Endothelial cell of umbilical vein (primary cell): ENCODE measurements at regions of chr13 and their contacts with region 1.

Region 1: GRCh38 chr13:106493533-106494220 is 41.8 kb downstream of the EFNB2 start:
- DNase-seq: no peak
- H3K4me3 ChIP-seq: no peak overlapping the region
- H3K27ac ChIP-seq: no peak overlapping the region
- H3K4me1 ChIP-seq: peaks cover 35% of the 10 kb centered on the region
- H3K27me3 ChIP-seq: no peaks in the 10 kb centered on the region
- CTCF ChIP-seq: no peak
- POLR2A ChIP-seq: no peak

Region 2: GRCh38 chr13:106357198-106357597 is 136.5 kb before region 1 on chr13:
- CTCF ChIA-PET with region 1: no interaction called
- POLR2A ChIA-PET with region 1: no interaction called
- dilution Hi-C with region 1: no loop called
- intact Hi-C with region 1: no loop called
- DNase-seq: peak; percentile 66
- H3K4me3 ChIP-seq: no peak overlapping the region
- H3K27ac ChIP-seq: no peak overlapping the region
- H3K4me1 ChIP-seq: peaks cover 6% of the 10 kb centered on the region
- H3K27me3 ChIP-seq: no peaks in the 10 kb centered on the region
- CTCF ChIP-seq: no peak
- POLR2A ChIP-seq: no peak

Region 3: GRCh38 chr13:106382534-106382933 is 111.1 kb before region 1 on chr13:
- CTCF ChIA-PET with region 1: no interaction called
- POLR2A ChIA-PET with region 1: no interaction called
- dilution Hi-C with region 1: no loop called
- intact Hi-C with region 1: no loop called
- DNase-seq: no peak
- H3K4me3 ChIP-seq: no peak overlapping the region
- H3K27ac ChIP-seq: no peak overlapping the region
- H3K4me1 ChIP-seq: no peaks in the 10 kb centered on the region
- H3K27me3 ChIP-seq: no peaks in the 10 kb centered on the region
- CTCF ChIP-seq: no peak
- POLR2A ChIP-seq: no peak

Region 4: GRCh38 chr13:106401081-106401480 is 92.6 kb before region 1 on chr13:
- CTCF ChIA-PET with region 1: no interaction called
- POLR2A ChIA-PET with region 1: no interaction called
- dilution Hi-C with region 1: no loop called
- intact Hi-C with region 1: loop called (anchors 1 kb)
- DNase-seq: peak; percentile 77
- H3K4me3 ChIP-seq: no peak overlapping the region
- H3K27ac ChIP-seq: no peak overlapping the region
- H3K4me1 ChIP-seq: peaks cover 14% of the 10 kb centered on the region
- H3K27me3 ChIP-seq: no peaks in the 10 kb centered on the region
- CTCF ChIP-seq: no peak
- POLR2A ChIP-seq: no peak

Region 5: GRCh38 chr13:106738186-106738678 is 244.6 kb after region 1 on chr13:
- CTCF ChIA-PET with region 1: no interaction called
- POLR2A ChIA-PET with region 1: no interaction called
- dilution Hi-C with region 1: no loop called
- intact Hi-C with region 1: no loop called
- DNase-seq: no peak
- H3K4me3 ChIP-seq: no peak overlapping the region
- H3K27ac ChIP-seq: no peak overlapping the region
- H3K4me1 ChIP-seq: no peaks in the 10 kb centered on the region
- H3K27me3 ChIP-seq: no peaks in the 10 kb centered on the region
- CTCF ChIP-seq: no peak
- POLR2A ChIP-seq: no peak